ENCODE measurements at regions of chr3 and their contacts with region 1.

Region 1: DNA sequence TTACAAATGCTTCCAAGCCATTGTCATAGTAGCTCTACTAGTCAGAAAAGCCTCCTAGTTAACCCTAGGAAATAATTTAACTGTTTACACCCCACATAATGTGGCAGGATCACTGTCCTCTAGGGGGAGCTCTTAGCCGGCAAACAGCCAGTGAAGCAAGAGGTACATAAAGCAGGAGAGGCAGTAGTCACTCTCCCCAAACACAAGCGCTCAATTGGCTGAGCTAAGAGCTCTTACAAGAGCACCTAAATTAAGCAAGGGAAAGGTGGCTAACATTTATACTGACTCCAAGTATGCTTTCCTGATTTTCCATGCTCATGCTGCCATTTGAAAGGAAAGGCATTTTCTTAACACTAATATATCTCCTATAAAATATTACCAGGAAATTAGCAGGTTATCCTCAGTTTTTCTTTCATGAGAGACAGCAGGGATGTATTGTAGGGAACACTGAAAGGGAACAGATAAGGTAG is 37.6 kb downstream of the NCEH1 start:
- DNase-seq: peak; percentile 49
- H3K27ac ChIP-seq: no peak overlapping the region
- CTCF ChIP-seq: peak; percentile 83

Region 2: DNA sequence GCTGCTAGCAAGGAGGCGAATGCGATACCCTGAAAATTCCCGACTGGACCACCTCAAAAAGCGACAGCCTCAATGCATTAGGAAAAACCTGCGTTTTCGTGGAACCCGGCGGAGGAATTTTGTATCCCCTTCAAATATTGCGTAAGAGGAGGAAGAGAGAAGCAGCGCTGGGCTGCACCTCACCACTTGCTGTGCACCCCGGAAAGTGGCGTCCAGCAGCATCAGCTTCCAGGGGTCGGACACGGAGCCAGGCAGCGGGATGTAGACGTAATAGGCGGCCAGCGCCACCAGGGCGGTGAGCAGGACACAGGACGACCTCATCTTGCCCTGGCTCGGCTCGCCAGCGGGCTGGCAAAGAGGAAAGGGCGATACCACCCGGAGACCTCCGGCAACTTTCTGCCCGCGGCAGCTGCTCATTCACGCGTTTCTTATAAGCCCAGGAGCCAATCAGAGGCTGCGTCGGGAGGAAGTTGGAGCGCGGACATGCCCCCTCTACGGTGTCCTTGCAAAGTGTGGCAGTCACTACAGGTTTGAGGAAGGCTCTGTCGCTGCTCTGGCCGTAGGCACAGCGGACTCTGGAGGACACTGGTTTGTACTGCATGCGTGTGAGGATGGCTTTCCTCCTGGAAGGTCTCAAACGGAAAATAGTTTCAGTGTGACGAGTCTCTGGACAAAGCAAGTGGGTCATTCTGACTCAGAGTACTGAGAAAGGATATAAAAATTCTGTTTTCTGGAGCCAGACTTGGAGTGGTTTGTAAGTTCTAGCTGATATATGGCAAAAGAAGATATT is 37.6 kb after region 1 on chr3 and contains the start of gene NCEH1:
- CTCF ChIA-PET with region 1: interaction called, 20 read pairs
- POLR2A ChIA-PET with region 1: no interaction called
- DNase-seq: peak; percentile 91
- H3K27ac ChIP-seq: peak within 1 kb of the TSS; percentile 92
- CTCF ChIP-seq: peak; percentile 93

Measured in RWPE1 (cell line).